CD4-positive, alpha-beta T cell (primary cell): ENCODE measurements at regions of chr5 and their contacts with region 1.

Region 1: DNA sequence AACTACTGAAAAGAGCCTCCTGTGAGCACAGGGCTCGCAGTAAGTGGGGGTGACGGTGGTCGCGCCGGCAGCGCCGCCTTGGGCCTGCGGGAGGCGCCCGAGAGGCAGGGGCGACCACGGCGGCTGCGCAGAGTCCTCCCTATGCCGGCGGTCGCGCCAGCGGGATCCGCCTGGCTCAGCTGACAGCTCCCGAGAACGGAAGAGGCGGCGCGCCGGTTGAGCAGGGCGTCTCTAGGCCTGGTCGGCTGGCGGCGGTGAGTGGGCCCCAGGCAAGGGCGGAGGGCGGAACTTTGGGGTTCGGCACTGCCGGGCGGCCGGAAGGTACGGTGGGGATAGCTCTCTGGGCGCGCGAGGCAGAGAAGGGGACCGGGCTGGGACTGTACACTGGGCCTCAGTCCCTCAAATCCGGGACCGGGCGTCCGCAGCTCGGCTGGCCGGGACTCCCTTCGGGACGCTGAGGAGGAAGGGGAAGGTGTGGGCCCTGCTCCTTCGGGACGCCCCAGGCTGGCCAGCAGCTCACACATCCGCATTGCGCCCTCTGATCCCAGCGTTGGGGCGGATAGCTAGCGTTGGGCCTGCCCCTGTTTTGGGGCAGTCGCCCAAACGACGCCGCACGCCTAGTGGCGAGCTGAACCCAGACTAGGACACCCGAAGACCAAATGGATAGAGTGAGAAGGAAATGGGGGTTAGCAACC is at the start of gene RNF14:
- DNase-seq: peak; percentile 86 to 97 (median 90)
- ATAC-seq: peak; percentile 95
- H3K4me3 ChIP-seq: peak within 1 kb of the TSS; percentile 76
- H3K4me3 Mint-ChIP-seq: peak within 1 kb of the TSS; percentile 98
- H3K27ac ChIP-seq: peak within 1 kb of the TSS; percentile 90 to 95
- H3K27ac Mint-ChIP-seq: peak within 1 kb of the TSS; percentile 99
- H3K4me1 ChIP-seq: peaks cover 15% of the 10 kb centered on the region
- H3K4me1 Mint-ChIP-seq: peaks cover 41% of the 10 kb centered on the region
- H3K27me3 ChIP-seq: no peaks in the 10 kb centered on the region
- H3K27me3 Mint-ChIP-seq: no peaks in the 10 kb centered on the region
- CTCF ChIP-seq: peak; percentile 97
- total RNA-seq, gene RNF14: 8.9 to 10.7 TPM

Region 2: GRCh38 chr5:141529002-141529401 is 440.1 kb before region 1 on chr5:
- CTCF ChIA-PET with region 1: no interaction called
- POLR2A ChIA-PET with region 1: no interaction called
- intact Hi-C with region 1: no loop called
- DNase-seq: no peak
- ATAC-seq: no peak
- H3K4me3 ChIP-seq: no peak overlapping the region
- H3K4me3 Mint-ChIP-seq: no peak overlapping the region
- H3K27ac ChIP-seq: no peak overlapping the region
- H3K27ac Mint-ChIP-seq: no peak overlapping the region
- H3K4me1 ChIP-seq: peaks cover 8% of the 10 kb centered on the region
- H3K4me1 Mint-ChIP-seq: peaks cover 12% of the 10 kb centered on the region
- H3K27me3 ChIP-seq: no peaks in the 10 kb centered on the region
- H3K27me3 Mint-ChIP-seq: no peaks in the 10 kb centered on the region
- CTCF ChIP-seq: no peak

Region 3: GRCh38 chr5:141691867-141692532 is 277.1 kb before region 1 on chr5:
- CTCF ChIA-PET with region 1: interaction called, 31 read pairs
- POLR2A ChIA-PET with region 1: interaction called, 32 read pairs
- intact Hi-C with region 1: no loop called
- DNase-seq: peak; percentile 66 to 92 (median 84)
- ATAC-seq: peak; percentile 68
- H3K4me3 ChIP-seq: peak overlapping the region; percentile 35
- H3K4me3 Mint-ChIP-seq: peak overlapping the region; percentile 57
- H3K27ac ChIP-seq: no peak overlapping the region
- H3K27ac Mint-ChIP-seq: no peak overlapping the region
- H3K4me1 ChIP-seq: peaks cover 20% of the 10 kb centered on the region
- H3K4me1 Mint-ChIP-seq: peaks cover 23% of the 10 kb centered on the region
- H3K27me3 ChIP-seq: no peaks in the 10 kb centered on the region
- H3K27me3 Mint-ChIP-seq: peaks cover 35% of the 10 kb centered on the region
- CTCF ChIP-seq: peak; percentile 98

Region 4: GRCh38 chr5:141878711-141879425 is 90.2 kb before region 1 on chr5:
- CTCF ChIA-PET with region 1: interaction called, 8 read pairs
- POLR2A ChIA-PET with region 1: interaction called, 13 read pairs
- intact Hi-C with region 1: no loop called
- DNase-seq: peak; percentile 80 to 97 (median 86)
- ATAC-seq: peak; percentile 85
- H3K4me3 ChIP-seq: peak overlapping the region; percentile 47
- H3K4me3 Mint-ChIP-seq: peak overlapping the region; percentile 81
- H3K27ac ChIP-seq: no peak overlapping the region
- H3K27ac Mint-ChIP-seq: no peak overlapping the region
- H3K4me1 ChIP-seq: peaks cover 44% of the 10 kb centered on the region
- H3K4me1 Mint-ChIP-seq: peaks cover 33% of the 10 kb centered on the region
- H3K27me3 ChIP-seq: peaks cover 84 to 85% of the 10 kb centered on the region in 2 experiments
- H3K27me3 Mint-ChIP-seq: peaks cover 85% of the 10 kb centered on the region
- CTCF ChIP-seq: peak; percentile 97

Region 5: DNA sequence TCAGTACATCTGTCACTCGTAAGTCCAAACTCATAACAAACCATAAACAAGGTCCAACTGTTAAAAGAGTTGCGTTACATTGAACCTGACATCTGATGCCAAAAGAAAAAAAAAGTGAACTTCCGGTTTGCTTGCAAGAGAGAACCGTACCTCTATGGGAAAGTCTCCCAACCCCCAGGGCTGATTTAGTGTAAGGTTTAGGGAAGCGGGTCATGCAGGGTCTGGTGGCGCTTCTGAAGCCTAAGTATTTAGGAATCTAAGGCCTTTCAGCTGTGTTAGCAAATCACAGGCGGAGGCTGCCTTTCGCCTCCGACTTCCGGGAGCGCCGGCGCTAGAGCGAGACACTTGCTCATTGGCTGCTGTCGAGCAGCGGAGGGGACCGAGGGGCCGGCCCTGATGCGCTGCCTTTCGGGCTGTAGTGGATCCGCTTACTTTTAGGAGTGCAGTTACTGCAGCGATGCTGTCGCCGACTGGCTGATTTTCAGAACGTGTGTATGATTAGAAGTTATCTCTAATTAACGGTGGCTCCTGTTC is 55.8 kb after region 1 on chr5:
- CTCF ChIA-PET with region 1: no interaction called
- POLR2A ChIA-PET with region 1: interaction called, 10 read pairs
- intact Hi-C with region 1: no loop called
- DNase-seq: peak; percentile 62 to 91 (median 80)
- ATAC-seq: peak; percentile 100
- H3K4me3 ChIP-seq: peak overlapping the region; percentile 53
- H3K4me3 Mint-ChIP-seq: peak overlapping the region; percentile 83
- H3K27ac ChIP-seq: peak overlapping the region; percentile 72 to 88
- H3K27ac Mint-ChIP-seq: peak overlapping the region; percentile 93
- H3K4me1 ChIP-seq: peaks cover 8% of the 10 kb centered on the region
- H3K4me1 Mint-ChIP-seq: peaks cover 25% of the 10 kb centered on the region
- H3K27me3 ChIP-seq: no peaks in the 10 kb centered on the region
- H3K27me3 Mint-ChIP-seq: no peaks in the 10 kb centered on the region
- CTCF ChIP-seq: no peak

Region 6: DNA sequence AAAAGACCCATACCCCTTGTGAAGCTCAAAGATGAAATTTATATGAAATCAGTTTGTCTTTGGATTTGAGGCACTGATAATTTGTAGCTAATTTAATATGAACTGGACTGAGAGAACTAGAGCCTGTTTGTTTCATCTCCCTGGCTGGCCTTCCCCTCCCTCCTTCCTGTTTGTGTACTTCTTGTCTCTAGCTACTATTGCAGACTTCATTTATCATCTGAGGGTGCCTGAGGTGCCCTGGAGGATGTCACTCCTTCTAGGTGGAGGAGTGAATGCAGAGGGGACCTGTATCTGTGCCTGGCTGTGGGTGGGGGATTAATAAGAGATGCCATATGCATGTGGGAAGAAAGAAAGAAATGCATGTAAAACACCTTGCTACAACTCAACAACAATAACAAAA is 65.9 kb after region 1 on chr5:
- CTCF ChIA-PET with region 1: no interaction called
- POLR2A ChIA-PET with region 1: no interaction called
- intact Hi-C with region 1: no loop called
- DNase-seq: peak in 4 of 14 experiments; percentile 4 to 51 (median 16)
- ATAC-seq: peak; percentile 58
- H3K4me3 ChIP-seq: no peak overlapping the region
- H3K4me3 Mint-ChIP-seq: no peak overlapping the region
- H3K27ac ChIP-seq: no peak overlapping the region
- H3K27ac Mint-ChIP-seq: peak overlapping the region; percentile 27
- H3K4me1 ChIP-seq: peaks cover 18% of the 10 kb centered on the region
- H3K4me1 Mint-ChIP-seq: peaks cover 21% of the 10 kb centered on the region
- H3K27me3 ChIP-seq: no peaks in the 10 kb centered on the region
- H3K27me3 Mint-ChIP-seq: no peaks in the 10 kb centered on the region
- CTCF ChIP-seq: no peak

Region 7: DNA sequence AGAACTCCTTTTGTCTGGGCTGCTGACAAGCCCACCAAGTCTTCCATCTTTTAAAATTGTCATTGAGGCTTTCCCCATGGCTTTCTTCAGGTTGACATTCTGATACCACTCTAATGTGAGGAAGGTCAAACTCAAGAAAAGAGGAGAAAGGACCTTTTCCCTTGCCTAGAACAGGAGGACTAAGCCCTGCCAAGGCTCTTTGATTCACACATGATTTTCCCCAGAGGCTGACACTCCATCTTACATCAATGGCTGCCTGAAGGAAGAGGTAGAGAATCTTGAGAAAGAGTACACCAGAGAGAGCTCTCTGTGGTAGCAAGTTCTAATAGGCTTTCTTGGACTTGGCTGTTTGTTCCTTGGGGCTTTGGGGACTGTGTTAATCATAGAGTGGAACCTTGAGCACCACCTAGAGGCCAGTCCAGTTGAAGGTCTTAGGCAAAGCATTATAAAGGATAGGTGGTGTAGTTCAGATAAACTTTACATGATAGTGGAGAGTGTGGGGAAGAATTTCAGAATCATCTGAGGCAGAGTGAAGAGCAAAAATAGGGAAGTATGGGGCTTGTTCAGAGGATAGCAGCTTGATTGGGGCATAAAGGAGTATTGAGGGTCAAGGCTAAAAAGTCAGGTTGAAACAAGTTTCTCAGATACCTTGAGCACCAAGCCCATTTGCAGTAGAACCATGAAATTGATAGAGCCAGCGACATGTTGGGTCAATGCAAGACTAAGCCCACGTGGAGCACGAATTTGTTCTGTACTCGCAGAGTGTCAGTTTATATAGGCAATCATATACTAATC is 176.2 kb after region 1 on chr5:
- CTCF ChIA-PET with region 1: interaction called, 10 read pairs
- POLR2A ChIA-PET with region 1: interaction called, 7 read pairs
- intact Hi-C with region 1: no loop called
- DNase-seq: peak; percentile 28 to 79 (median 52)
- ATAC-seq: peak; percentile 74
- H3K4me3 ChIP-seq: no peak overlapping the region
- H3K4me3 Mint-ChIP-seq: no peak overlapping the region
- H3K27ac ChIP-seq: no peak overlapping the region
- H3K27ac Mint-ChIP-seq: no peak overlapping the region
- H3K4me1 ChIP-seq: no peaks in the 10 kb centered on the region
- H3K4me1 Mint-ChIP-seq: peaks cover 5% of the 10 kb centered on the region
- H3K27me3 ChIP-seq: no peaks in the 10 kb centered on the region
- H3K27me3 Mint-ChIP-seq: no peaks in the 10 kb centered on the region
- CTCF ChIP-seq: peak; percentile 75